Activated T-helper 2 cell treated with anti-CD3 and anti-CD28 coated beads, Interferon-gamma antibody, Interleukin-2, Interleukin-4, amounts not matched to agents 10 μg/mL and 5 μg/mL and 100 μg/mL, durations not matched to agents 14 hours and 24 hours and 36 hours (primary cell): ENCODE measurements at regions of chr2 and their contacts with region 1.

Region 1: GRCh38 chr2:230987137-230988020 is 8.5 kb upstream of the SPATA3 start:
- DNase-seq: peak; percentile 63
- H3K4me3 Mint-ChIP-seq: peak overlapping the region; percentile 58
- H3K27ac Mint-ChIP-seq: no peak overlapping the region
- H3K4me1 Mint-ChIP-seq: peaks cover 29% of the 10 kb centered on the region
- H3K27me3 Mint-ChIP-seq: peaks cover 40% of the 10 kb centered on the region

Region 2: DNA sequence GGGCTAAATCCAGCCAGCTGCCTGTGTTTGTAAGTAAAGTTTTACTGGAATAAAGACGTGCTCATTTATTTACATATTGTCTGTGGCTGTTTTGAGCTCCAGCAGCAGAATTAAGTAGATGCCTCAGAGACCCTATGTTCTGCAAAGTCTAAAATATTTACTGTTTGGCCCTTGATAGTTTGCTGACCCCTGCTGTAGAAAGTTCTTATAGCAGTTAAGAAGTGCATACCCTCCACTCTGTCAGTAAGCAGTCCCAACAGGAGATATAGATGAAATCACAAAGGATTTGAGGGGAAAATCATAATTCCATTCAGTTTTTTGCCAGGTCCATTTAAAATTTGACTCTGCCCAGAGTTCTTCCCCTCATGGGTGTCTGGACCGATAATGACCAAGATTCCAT is 172.8 kb before region 1 on chr2:
- intact Hi-C with region 1: no loop called
- DNase-seq: no peak
- H3K4me3 Mint-ChIP-seq: no peak overlapping the region
- H3K27ac Mint-ChIP-seq: no peak overlapping the region
- H3K4me1 Mint-ChIP-seq: peaks cover 15% of the 10 kb centered on the region
- H3K27me3 Mint-ChIP-seq: no peaks in the 10 kb centered on the region

Region 3: GRCh38 chr2:230847883-230848388 is 139.4 kb before region 1 on chr2:
- intact Hi-C with region 1: loop called (anchors 1 kb)
- DNase-seq: peak; percentile 76
- H3K4me3 Mint-ChIP-seq: no peak overlapping the region
- H3K27ac Mint-ChIP-seq: no peak overlapping the region
- H3K4me1 Mint-ChIP-seq: peaks cover 10% of the 10 kb centered on the region
- H3K27me3 Mint-ChIP-seq: peaks cover 53% of the 10 kb centered on the region

Region 4: DNA sequence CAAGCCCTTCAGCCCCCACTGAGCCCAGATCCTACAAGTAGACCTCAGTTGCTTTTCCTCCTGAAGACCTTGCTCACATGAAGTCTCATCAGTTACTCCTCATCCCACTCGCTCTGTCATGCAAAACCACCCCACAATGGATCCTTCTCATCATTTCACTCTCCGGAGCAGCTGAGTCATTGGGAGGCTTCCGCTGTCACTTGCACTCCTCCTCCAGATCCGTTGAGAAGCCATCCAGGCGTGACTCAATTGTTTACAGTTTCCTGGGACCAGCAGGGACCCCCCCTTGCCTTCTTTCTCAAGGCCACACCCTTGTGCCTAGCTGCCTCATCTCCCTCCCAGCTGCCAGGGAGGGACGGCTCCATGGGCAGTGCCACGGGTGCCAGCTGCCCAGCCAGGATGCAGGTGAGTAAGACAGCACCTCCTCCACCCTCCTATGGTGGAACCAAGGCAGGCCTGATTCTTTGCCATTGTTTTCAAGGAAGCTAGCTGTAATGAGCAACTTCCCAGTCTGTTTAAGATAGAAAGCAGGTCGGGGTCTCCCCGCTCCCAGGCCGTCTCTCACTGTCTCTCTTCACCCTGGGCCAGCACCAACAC is 78.7 kb before region 1 on chr2:
- intact Hi-C with region 1: loop called (anchors 1 kb)
- DNase-seq: no peak
- H3K4me3 Mint-ChIP-seq: peak overlapping the region; percentile 74
- H3K27ac Mint-ChIP-seq: peak overlapping the region; percentile 75
- H3K4me1 Mint-ChIP-seq: peaks cover 54% of the 10 kb centered on the region
- H3K27me3 Mint-ChIP-seq: peaks cover 39% of the 10 kb centered on the region

Region 5: GRCh38 chr2:230942920-230943896 is 44.2 kb before region 1 on chr2:
- intact Hi-C with region 1: loop called (anchors 1 kb)
- DNase-seq: no peak
- H3K4me3 Mint-ChIP-seq: peak overlapping the region; percentile 3
- H3K27ac Mint-ChIP-seq: no peak overlapping the region
- H3K4me1 Mint-ChIP-seq: peaks cover 14% of the 10 kb centered on the region
- H3K27me3 Mint-ChIP-seq: peaks cover 23% of the 10 kb centered on the region

Region 6: GRCh38 chr2:230974096-230974913 is 13.1 kb before region 1 on chr2:
- intact Hi-C with region 1: loop called (anchors 1 kb)
- DNase-seq: peak; percentile 57
- H3K4me3 Mint-ChIP-seq: peak overlapping the region; percentile 40
- H3K27ac Mint-ChIP-seq: peak overlapping the region; percentile 89
- H3K4me1 Mint-ChIP-seq: peaks cover 54% of the 10 kb centered on the region
- H3K27me3 Mint-ChIP-seq: peaks cover 33% of the 10 kb centered on the region